WTC11 (cell line): ENCODE measurements at regions of chr3 and their contacts with region 1.

Region 1: DNA sequence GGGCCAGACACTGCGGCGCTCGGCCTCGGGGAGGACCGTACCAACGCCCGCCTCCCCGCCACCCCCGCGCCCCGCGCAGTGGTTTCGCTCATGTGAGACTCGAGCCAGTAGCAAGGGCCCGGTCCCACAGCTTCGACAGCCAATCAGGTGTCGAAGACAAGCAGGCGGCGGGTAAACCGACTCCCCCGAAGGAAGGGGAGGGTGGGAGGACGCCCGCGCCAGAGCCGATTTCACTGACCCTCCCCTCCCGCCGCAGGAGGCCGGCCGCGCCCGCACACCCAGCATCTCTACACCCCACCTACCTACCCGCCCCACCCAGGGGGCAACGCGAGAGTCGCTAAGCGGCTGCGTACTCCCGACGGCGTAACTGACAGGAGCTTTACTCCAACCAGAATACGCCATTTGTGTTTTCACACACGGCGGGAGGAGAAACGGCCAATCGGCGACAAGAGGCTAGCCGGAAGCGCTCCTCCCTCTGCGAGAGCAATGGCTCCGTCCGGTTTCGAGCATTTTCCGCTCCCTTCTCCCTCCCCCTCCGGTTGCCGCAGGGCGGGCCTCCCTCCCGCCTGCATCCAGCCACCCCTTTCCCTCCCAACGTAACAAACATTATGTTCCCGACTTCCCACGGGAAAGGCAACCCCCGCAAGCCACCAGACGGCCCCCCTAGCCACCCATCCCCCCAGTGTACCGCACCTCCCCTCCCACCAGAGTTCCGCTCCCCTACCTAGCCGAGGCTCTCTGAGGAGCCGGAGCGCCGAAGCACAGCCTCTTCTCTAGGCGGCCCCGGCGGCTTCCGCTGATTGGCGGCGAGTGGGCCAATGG is 504 bp upstream of the SETD5 start:
- DNase-seq: peak; percentile 99
- ATAC-seq: peak; percentile 77
- H3K4me3 Mint-ChIP-seq: peak overlapping the region; percentile 95
- H3K27ac Mint-ChIP-seq: peak overlapping the region; percentile 99
- H3K4me1 Mint-ChIP-seq: peaks cover 49% of the 10 kb centered on the region
- H3K27me3 Mint-ChIP-seq: no peaks in the 10 kb centered on the region
- CTCF ChIP-seq: no peak

Region 2: DNA sequence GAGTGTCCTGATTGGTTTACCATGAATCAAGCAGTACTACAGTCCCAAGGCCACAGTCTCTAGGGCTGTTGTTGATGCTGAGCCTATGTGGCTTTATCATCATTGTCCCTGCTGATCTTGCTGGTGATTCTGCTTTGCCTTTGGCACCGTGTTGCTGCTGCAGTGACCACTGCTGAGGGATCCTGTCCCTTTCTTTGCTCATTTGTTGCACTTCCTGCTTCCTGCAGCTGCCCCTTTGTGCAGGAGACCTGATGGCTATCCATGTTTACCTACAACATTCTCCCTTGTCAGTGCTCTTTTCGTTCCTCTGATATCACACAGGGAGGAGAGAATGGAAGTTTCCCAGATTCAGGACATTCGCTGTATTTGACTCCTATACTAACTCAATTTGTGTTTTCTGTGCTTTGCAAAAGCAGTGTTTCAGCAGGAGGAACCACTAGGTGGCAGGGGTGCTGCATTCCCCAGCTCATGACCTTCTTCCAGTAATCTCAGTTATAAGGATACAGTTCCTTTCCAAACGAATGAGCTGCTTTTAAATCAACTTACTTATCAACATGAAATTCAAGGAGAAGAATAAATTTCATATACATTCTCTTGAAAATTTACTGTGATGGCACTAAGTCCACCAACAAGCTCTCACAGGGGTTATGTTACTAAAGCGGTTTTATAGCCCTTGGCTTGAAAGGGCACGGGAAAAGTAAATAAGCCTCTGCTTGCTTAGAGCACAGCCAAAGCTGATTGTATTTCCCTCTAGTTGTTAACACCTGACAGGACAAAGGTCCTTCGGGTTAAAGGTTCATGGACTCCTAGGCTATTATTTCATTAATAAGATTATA is 43.8 kb before region 1 on chr3:
- CTCF ChIA-PET with region 1: interaction called, 13 read pairs
- POLR2A ChIA-PET with region 1: interaction called, 3 read pairs
- DNase-seq: peak; percentile 72
- ATAC-seq: peak; percentile 74
- H3K4me3 Mint-ChIP-seq: peak overlapping the region; percentile 45; the same call in 1 of the 2 replicates
- H3K27ac Mint-ChIP-seq: peak overlapping the region; percentile 97
- H3K4me1 Mint-ChIP-seq: peaks cover 46% of the 10 kb centered on the region
- H3K27me3 Mint-ChIP-seq: no peaks in the 10 kb centered on the region
- CTCF ChIP-seq: peak; percentile 68

Region 3: DNA sequence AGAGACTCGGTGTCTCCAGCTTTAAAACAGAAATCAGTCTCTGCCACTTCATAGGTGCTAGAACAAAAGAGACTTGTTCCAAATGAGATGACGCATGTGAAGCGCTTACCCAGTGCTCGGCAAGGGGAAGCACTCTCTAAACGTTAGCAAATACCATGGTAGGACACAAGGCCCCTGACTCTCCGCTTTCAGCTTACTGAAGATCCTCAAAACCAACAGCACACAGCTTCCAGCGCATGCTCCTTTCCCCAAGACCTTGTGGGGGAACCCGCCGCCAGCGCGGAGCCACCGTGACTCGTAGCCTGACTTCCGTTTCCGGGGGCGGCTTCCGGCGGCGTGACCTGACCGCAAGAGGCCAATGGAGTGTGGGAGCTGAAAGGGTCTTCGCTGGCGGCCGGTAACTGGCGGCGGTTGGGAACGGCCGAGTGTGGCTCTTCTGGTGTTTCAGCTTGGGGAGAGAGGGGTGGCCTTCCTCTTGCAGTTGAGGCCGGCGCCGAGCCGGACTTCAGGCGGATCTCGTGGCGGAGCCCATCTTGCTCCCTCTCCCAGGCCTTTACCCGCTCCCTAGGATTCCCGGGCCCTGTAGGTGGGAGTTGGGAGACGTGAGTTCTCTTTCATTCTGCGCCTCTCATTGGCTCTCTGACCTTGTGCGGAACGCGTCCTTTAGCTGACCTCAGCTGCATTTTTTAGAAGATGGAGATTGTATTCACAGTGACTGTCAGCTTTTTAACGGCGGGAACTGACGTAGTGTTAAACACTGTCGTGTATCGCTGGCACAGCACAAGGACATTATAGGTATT is 34.0 kb before region 1 on chr3 and contains the start of gene THUMPD3:
- CTCF ChIA-PET with region 1: interaction called, 5 read pairs
- POLR2A ChIA-PET with region 1: interaction called, 36 read pairs
- DNase-seq: peak; percentile 89
- ATAC-seq: peak; percentile 96
- H3K4me3 Mint-ChIP-seq: peak within 1 kb of the TSS; percentile 86
- H3K27ac Mint-ChIP-seq: peak within 1 kb of the TSS; percentile 94
- H3K4me1 Mint-ChIP-seq: peaks cover 8% of the 10 kb centered on the region
- H3K27me3 Mint-ChIP-seq: peaks cover 5% of the 10 kb centered on the region
- CTCF ChIP-seq: no peak
- total RNA-seq, gene THUMPD3: 55.2 to 67.5 TPM (median 66.0 TPM) in 3 replicates

Region 4: DNA sequence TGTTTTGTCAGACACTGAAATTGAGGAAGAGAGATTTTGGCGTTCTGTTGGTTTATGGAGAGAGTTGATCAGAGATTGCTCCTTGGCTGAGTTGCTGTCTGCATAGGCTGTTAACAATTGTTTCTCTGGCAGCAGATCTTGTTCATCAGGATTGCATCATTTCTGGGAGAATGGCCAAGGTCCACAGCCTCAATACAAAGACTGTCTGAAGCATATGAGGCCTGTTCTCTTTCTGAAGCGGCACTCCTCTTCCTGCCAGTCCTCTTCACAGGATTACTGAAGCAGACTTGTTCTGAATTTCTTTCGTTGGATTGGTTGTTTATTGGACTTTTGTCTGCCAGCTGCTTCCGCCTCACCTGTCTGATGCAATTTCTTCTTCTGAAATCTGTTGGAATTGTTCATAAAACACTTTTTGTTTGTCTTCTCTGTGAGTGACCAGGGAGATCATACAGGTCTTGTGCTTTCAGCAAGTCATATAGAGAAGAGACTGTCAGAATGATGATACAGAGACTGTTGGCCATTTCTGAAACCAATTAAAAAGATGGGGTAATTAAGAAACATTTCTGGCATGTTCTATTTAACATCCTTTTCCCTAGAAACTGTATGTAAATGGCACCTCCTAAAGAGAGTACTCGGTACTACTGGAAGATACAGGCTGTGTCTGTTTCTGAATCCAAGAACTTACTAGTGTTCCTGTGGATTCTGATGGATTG is 26.0 kb after region 1 on chr3:
- CTCF ChIA-PET with region 1: interaction called, 9 read pairs
- POLR2A ChIA-PET with region 1: interaction called, 15 read pairs
- DNase-seq: no peak
- ATAC-seq: peak; percentile 83
- H3K4me3 Mint-ChIP-seq: peak overlapping the region; percentile 38; the same call in 1 of the 2 replicates
- H3K27ac Mint-ChIP-seq: peak overlapping the region; percentile 97
- H3K4me1 Mint-ChIP-seq: peaks cover 34% of the 10 kb centered on the region
- H3K27me3 Mint-ChIP-seq: no peaks in the 10 kb centered on the region
- CTCF ChIP-seq: no peak